H1 (cell line): ENCODE measurements at regions of chr17 and their contacts with region 1.

Region 1: GRCh38 chr17:43024407-43025289 is at the start of gene RND2:
- DNase-seq: peak; percentile 93 to 95
- H3K4me3 ChIP-seq: peak within 1 kb of the TSS; percentile 58 to 93 (median 84)
- H3K27ac ChIP-seq: peak within 1 kb of the TSS; percentile 91
- H3K4me1 ChIP-seq: peaks cover 19 to 28% (median 21%) of the 10 kb centered on the region in 4 experiments
- H3K27me3 ChIP-seq: no peaks in the 10 kb centered on the region
- CTCF ChIP-seq: peak; percentile 68 to 91 (median 89)
- EP300 ChIP-seq: 0 out of 3 replicates have a peak, but pooled peaks of 1 of the 2 experiments have one; percentile 53
- POLR2A ChIP-seq: peak in 1 of 2 experiments; percentile 40; a peak in 1 of 3 replicates
- RAD21 ChIP-seq: peak; percentile 93 to 94
- total RNA-seq, gene RND2: 51.3 and 56.8 TPM in 2 replicates

Region 2: GRCh38 chr17:42908872-42909700 is 115.6 kb before region 1 on chr17:
- CTCF ChIA-PET with region 1: no interaction called
- POLR2A ChIA-PET with region 1: no interaction called
- DNase-seq: no peak
- H3K4me3 ChIP-seq: no peak overlapping the region
- H3K27ac ChIP-seq: no peak overlapping the region
- H3K4me1 ChIP-seq: no peaks in the 10 kb centered on the region; a peak in 1 of 7 replicates
- H3K27me3 ChIP-seq: no peaks in the 10 kb centered on the region
- CTCF ChIP-seq: no peak
- EP300 ChIP-seq: no peak
- POLR2A ChIP-seq: no peak
- RAD21 ChIP-seq: no peak

Region 3: GRCh38 chr17:43042025-43042628 is 17.5 kb after region 1 on chr17:
- CTCF ChIA-PET with region 1: interaction called, 26 read pairs
- POLR2A ChIA-PET with region 1: interaction called, 61 read pairs
- DNase-seq: no peak
- H3K4me3 ChIP-seq: peak overlapping the region in 1 of 4 experiments; percentile 1; a peak in 1 of 8 replicates
- H3K27ac ChIP-seq: peak overlapping the region; percentile 49
- H3K4me1 ChIP-seq: peaks cover 1 to 32% (median 22%) of the 10 kb centered on the region in 4 experiments
- H3K27me3 ChIP-seq: no peaks in the 10 kb centered on the region
- CTCF ChIP-seq: no peak
- EP300 ChIP-seq: no peak
- POLR2A ChIP-seq: no peak
- RAD21 ChIP-seq: peak; percentile 26 to 44; a peak in 3 of 4 replicates

Region 4: DNA sequence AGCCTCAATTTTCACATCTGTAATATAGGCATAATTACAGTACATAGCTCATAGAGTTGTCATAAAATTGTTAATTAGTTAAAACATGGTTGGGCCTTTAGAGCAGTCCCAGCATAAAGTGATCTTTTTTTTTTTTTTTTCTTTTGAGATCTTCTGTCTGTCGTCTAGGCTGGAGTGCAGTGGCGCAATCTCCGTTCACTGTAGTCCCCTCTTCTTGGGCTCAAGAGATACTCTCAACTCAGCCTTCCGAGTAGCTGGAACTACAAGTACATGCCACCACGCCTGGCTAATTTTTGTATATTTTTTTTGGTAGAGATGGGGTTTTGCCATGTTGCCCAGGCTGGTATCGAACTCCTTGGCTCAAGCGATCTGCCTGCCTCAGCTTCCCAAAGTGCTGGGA is 31.4 kb after region 1 on chr17:
- CTCF ChIA-PET with region 1: interaction called, 10 read pairs
- POLR2A ChIA-PET with region 1: no interaction called
- DNase-seq: no peak
- H3K4me3 ChIP-seq: no peak overlapping the region
- H3K27ac ChIP-seq: no peak overlapping the region
- H3K4me1 ChIP-seq: no peaks in the 10 kb centered on the region
- H3K27me3 ChIP-seq: no peaks in the 10 kb centered on the region
- CTCF ChIP-seq: no peak
- EP300 ChIP-seq: no peak
- POLR2A ChIP-seq: no peak
- RAD21 ChIP-seq: no peak

Region 5: GRCh38 chr17:43079578-43080302 is 55.1 kb after region 1 on chr17:
- CTCF ChIA-PET with region 1: interaction called, 15 read pairs
- POLR2A ChIA-PET with region 1: no interaction called
- DNase-seq: no peak
- H3K4me3 ChIP-seq: no peak overlapping the region; a peak in 1 of 8 replicates
- H3K27ac ChIP-seq: no peak overlapping the region
- H3K4me1 ChIP-seq: peaks cover 0 to 7% (median 2%) of the 10 kb centered on the region in 4 experiments; a peak in 2 of 7 replicates
- H3K27me3 ChIP-seq: no peaks in the 10 kb centered on the region
- CTCF ChIP-seq: no peak
- EP300 ChIP-seq: no peak
- POLR2A ChIP-seq: no peak
- RAD21 ChIP-seq: no peak

Region 6: GRCh38 chr17:43125133-43125966 is 100.7 kb after region 1 on chr17 and contains the start of gene BRCA1:
- CTCF ChIA-PET with region 1: interaction called, 4 read pairs
- POLR2A ChIA-PET with region 1: interaction called, 15 read pairs
- DNase-seq: peak; percentile 93 to 95
- H3K4me3 ChIP-seq: peak within 1 kb of the TSS; percentile 81 to 99 (median 82)
- H3K27ac ChIP-seq: peak within 1 kb of the TSS; percentile 81
- H3K4me1 ChIP-seq: peaks cover 0 to 4% (median 3%) of the 10 kb centered on the region in 4 experiments; a peak in 4 of 7 replicates
- H3K27me3 ChIP-seq: no peaks in the 10 kb centered on the region
- CTCF ChIP-seq: no peak
- EP300 ChIP-seq: no peak; a peak in 1 of 3 replicates
- POLR2A ChIP-seq: peak; percentile 60 to 76; a peak in 2 of 3 replicates
- RAD21 ChIP-seq: no peak
- total RNA-seq, gene BRCA1: 39.2 and 40.3 TPM in 2 replicates